ENCODE measurements at regions of chr17 and their contacts with region 1.

Region 1: GRCh38 chr17:67431249-67432048 is 54.4 kb downstream of the PITPNC1 start:
- DNase-seq: no peak
- ATAC-seq: peak; percentile 18
- H3K4me3 ChIP-seq: no peak overlapping the region
- H3K4me3 Mint-ChIP-seq: peak overlapping the region in 9 of 10 donors; percentile 8 to 80 (median 26)
- H3K27ac ChIP-seq: peak overlapping the region; percentile 43
- H3K27ac Mint-ChIP-seq: peak overlapping the region; percentile 12 to 100 (median 85)
- H3K4me1 ChIP-seq: peaks cover 41 to 50% of the 10 kb centered on the region in 2 donors
- H3K4me1 Mint-ChIP-seq: peaks cover 27 to 93% (median 75%) of the 10 kb centered on the region in 7 donors
- H3K27me3 ChIP-seq: no peaks in the 10 kb centered on the region
- H3K27me3 Mint-ChIP-seq: no peaks in the 10 kb centered on the region

Region 2: GRCh38 chr17:67390646-67391384 is 40.6 kb before region 1 on chr17:
- CTCF ChIA-PET with region 1: interaction called, 5 read pairs
- POLR2A ChIA-PET with region 1: interaction called, 22 read pairs
- intact Hi-C with region 1: loop called (anchors 1 kb)
- DNase-seq: peak in 6 of 9 donors; percentile 50 to 74 (median 62)
- ATAC-seq: peak; percentile 89
- H3K4me3 ChIP-seq: peak overlapping the region; percentile 34
- H3K4me3 Mint-ChIP-seq: peak overlapping the region; percentile 66 to 90 (median 84)
- H3K27ac ChIP-seq: peak overlapping the region; percentile 76
- H3K27ac Mint-ChIP-seq: peak overlapping the region; percentile 85 to 99 (median 95)
- H3K4me1 ChIP-seq: peaks cover 29 to 46% of the 10 kb centered on the region in 2 donors
- H3K4me1 Mint-ChIP-seq: peaks cover 47 to 95% (median 73%) of the 10 kb centered on the region in 7 donors
- H3K27me3 ChIP-seq: no peaks in the 10 kb centered on the region
- H3K27me3 Mint-ChIP-seq: no peaks in the 10 kb centered on the region

Region 3: GRCh38 chr17:67469208-67469895 is 37.9 kb after region 1 on chr17:
- CTCF ChIA-PET with region 1: interaction called, 19 read pairs
- POLR2A ChIA-PET with region 1: interaction called, 176 read pairs
- intact Hi-C with region 1: no loop called
- DNase-seq: peak in 2 of 9 donors; percentile 28 to 57
- ATAC-seq: peak; percentile 58
- H3K4me3 ChIP-seq: peak overlapping the region; percentile 53
- H3K4me3 Mint-ChIP-seq: peak overlapping the region; percentile 66 to 90 (median 82)
- H3K27ac ChIP-seq: peak overlapping the region; percentile 74
- H3K27ac Mint-ChIP-seq: peak overlapping the region; percentile 82 to 97 (median 92)
- H3K4me1 ChIP-seq: peaks cover 32 to 63% of the 10 kb centered on the region in 2 donors
- H3K4me1 Mint-ChIP-seq: peaks cover 39 to 84% (median 65%) of the 10 kb centered on the region in 7 donors
- H3K27me3 ChIP-seq: no peaks in the 10 kb centered on the region
- H3K27me3 Mint-ChIP-seq: no peaks in the 10 kb centered on the region